Panc1 (cell line): ENCODE measurements at regions of chr12 and their contacts with region 1.

Region 1: GRCh38 chr12:119154419-119154818 is 24.3 kb upstream of the HSPB8 start:
- DNase-seq: no peak
- ATAC-seq: no peak
- H3K4me3 ChIP-seq: no peak overlapping the region
- H3K27ac ChIP-seq: no peak overlapping the region
- H3K4me1 ChIP-seq: no peaks in the 10 kb centered on the region
- H3K27me3 ChIP-seq: no peaks in the 10 kb centered on the region; the same call in 1 of the 2 replicates
- CTCF ChIP-seq: no peak

Region 2: DNA sequence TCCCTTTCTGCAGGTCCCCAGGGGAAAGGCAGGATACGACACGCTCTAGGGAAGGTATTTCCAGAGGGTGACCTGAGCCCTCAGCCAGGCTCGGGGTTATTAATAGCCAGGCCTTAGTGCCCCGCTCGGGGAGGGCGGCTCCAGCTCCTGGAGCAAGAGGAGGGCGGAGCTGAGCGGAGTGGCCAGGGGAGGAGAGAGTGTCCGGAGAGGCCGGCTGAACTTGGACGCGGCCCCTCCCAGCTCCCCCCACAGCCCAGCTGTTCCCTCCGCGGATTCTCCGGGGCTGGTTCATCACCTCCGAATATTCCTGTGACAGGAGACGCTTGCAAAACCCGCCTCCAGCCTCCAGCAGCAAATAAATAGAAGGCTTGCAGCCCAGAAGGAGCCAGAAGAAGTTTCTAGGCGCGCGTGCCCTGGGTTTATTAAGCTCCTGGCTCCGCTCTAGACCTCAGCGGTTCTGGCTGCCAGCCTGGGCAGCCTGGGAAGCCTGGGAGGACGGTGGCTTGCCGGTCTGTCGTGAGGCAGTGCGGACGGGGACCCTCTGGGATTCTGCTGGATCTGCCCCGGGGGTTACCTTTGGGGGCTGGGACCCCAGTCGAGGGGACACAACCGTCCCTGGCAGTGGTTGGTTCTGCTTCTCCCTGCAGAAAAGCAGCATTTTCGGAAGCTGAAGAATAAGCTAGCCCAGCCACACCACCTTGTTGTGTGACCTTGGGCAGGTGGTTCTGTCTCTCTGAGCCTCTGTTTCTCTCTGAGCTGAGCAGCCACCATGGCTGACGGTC is 24.3 kb after region 1 on chr12 and contains the start of gene HSPB8:
- CTCF ChIA-PET with region 1: interaction called, 12 read pairs
- POLR2A ChIA-PET with region 1: no interaction called
- in situ Hi-C with region 1: no loop called
- intact Hi-C with region 1: no loop called
- DNase-seq: peak; percentile 69
- ATAC-seq: peak; percentile 89
- H3K4me3 ChIP-seq: peak within 1 kb of the TSS; percentile 40 to 72
- H3K27ac ChIP-seq: 0 out of 2 replicates have a peak within 1 kb of the TSS, but pooled peaks have one; percentile 32
- H3K4me1 ChIP-seq: peaks cover 16% of the 10 kb centered on the region
- H3K27me3 ChIP-seq: no peaks in the 10 kb centered on the region; the same call in 1 of the 2 replicates
- CTCF ChIP-seq: no peak
- total RNA-seq, gene HSPB8: 2.0 TPM

Region 3: DNA sequence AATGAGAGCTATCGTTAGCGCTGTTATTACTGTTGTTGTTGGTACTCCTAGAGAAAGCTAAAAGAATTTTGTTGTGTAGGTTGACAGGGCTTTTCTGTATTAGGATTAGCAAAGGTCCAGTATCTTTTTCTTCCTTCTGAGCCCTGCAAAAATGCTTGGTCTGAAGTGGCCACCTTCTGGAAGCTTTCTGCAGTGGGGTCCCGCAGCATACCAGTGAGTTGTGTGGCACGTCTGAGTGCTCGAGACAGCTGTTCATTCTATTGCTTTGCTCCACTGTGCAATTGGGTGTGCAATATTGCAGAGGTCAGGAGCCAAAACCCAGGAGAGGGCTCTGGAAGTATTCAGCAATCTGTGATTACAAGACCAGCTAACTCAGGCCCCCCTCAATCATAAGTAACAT is 237.3 kb after region 1 on chr12:
- CTCF ChIA-PET with region 1: no interaction called
- POLR2A ChIA-PET with region 1: no interaction called
- in situ Hi-C with region 1: no loop called
- intact Hi-C with region 1: no loop called
- DNase-seq: no peak
- ATAC-seq: no peak
- H3K4me3 ChIP-seq: no peak overlapping the region
- H3K27ac ChIP-seq: no peak overlapping the region
- H3K4me1 ChIP-seq: no peaks in the 10 kb centered on the region
- H3K27me3 ChIP-seq: peaks cover 5% of the 10 kb centered on the region; the same call in 1 of the 2 replicates
- CTCF ChIP-seq: no peak